ENCODE measurements at regions of chr7 and their contacts with region 1.

Region 1: DNA sequence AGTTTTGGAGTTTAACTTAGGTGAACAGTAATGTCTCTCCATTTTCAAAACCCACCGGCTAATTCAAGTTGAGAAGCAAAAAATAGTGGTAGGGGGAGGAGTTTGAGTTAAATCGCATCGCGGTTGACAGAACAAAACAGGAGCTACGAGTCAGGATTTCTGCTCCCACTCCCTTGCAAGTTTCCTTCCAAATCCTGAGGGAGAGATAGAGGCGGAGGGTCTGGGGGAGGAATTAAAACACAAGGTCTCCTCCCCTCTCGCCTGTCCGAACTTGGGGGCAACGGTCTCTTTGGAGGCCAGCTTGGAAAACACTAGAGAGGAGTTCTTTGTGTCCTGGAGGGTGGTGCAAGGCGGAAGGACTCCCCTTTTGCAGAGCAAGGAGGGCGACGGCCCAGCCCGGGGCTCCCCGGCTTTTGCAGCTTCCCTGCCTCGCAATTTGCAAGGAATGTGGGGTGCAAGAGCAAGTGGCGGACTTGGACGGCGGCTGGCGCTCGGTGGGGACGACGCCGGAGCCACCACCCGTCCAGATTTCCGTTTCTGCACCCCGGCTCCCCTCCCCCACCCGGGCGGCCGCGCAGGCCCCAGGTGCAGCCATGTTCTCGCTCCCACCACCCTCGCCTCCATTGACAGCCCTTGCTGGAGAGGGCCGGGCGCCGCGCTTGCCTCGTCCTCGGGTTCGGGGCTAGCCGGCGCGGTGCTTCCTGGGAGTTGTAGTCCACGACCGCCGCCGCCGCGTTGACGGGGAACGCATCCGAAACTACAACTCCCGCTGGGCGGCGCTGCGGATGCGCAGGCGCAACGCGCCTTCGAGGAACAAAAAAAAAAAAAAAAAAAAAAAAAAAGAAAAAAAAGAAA is 454 bp upstream of the GTF2I start:
- DNase-seq: peak; percentile 97
- H3K4me3 Mint-ChIP-seq: peak overlapping the region; percentile 85
- H3K27ac Mint-ChIP-seq: peak overlapping the region; percentile 93
- H3K4me1 Mint-ChIP-seq: peaks cover 48% of the 10 kb centered on the region
- H3K27me3 Mint-ChIP-seq: peaks cover 6% of the 10 kb centered on the region

Region 2: DNA sequence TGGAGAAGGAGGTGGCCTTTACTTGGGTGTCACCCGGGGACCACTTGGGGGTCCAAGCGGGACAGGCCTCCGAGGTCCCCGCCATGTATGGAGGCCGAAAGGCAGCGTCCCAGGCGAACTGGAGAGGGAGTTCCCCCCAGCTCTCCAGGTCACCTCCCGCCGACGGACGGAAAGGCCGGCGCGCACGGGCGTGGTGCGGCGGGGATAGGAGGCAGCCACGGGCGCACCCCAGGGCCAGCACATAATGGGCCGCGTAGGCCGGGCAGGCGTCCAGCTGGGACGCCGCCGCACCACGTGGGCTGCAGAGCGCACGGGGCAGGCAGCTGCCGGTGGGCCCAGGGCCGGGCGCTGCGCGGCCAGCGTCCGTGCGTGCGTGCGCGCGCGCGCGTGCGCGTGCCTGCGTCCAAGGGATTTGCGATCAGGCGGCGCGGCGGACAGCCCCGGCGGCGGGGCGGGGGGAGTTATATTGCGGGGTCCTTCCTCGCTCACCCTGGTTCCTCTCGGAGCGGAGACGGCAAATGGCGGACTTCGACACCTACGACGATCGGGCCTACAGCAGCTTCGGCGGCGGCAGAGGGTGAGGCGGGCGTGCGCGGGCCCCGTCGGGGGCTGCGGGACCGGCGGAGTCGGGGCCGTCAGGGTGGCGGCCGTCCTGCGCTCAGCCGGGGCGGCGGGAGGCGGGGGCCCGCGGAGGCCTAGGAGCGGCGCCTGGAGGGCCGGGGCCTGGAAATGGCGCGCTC is 483.0 kb before region 1 on chr7 and contains the start of gene EIF4H:
- intact Hi-C with region 1: loop called (anchors 2 kb)
- DNase-seq: peak; percentile 93
- H3K4me3 Mint-ChIP-seq: peak within 1 kb of the TSS; percentile 94
- H3K27ac Mint-ChIP-seq: peak within 1 kb of the TSS; percentile 90
- H3K4me1 Mint-ChIP-seq: peaks cover 45% of the 10 kb centered on the region
- H3K27me3 Mint-ChIP-seq: peaks cover 3% of the 10 kb centered on the region
- total RNA-seq, gene EIF4H: 343 and 355 TPM in 2 replicates

Region 3: GRCh38 chr7:74306730-74307469 is 350.2 kb before region 1 on chr7:
- intact Hi-C with region 1: no loop called
- DNase-seq: no peak
- H3K4me3 Mint-ChIP-seq: no peak overlapping the region
- H3K27ac Mint-ChIP-seq: no peak overlapping the region
- H3K4me1 Mint-ChIP-seq: peaks cover 17% of the 10 kb centered on the region
- H3K27me3 Mint-ChIP-seq: peaks cover 10% of the 10 kb centered on the region

Region 4: DNA sequence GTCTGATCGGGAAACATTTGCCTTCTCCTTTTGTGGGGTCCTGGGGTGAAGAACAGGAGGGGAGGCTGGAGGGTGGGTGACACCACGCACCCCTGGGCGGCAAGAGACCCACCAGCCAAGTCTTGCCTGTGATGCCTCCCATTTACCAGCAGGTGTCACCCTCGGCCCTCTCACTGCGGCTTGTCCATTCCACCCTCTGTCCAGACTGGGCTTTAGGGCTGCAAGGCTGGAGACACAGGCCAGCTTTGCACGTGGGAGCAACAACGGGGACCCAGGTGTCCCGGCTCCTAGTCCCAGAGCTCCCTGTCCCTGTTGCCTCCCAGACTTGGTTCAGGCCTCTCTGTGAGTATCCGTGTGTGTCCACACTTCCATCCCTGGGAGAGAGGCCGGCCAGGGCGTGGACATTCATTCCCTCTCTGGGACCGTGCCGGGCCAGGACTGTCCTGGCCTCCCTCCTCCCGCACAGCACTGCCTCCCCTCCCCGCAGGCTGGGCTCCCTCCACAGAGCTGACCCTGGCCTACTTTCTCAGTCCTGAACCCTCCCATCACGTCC is 239.6 kb before region 1 on chr7:
- intact Hi-C with region 1: loop called (anchors 10 kb)
- DNase-seq: peak; percentile 26
- H3K4me3 Mint-ChIP-seq: no peak overlapping the region
- H3K27ac Mint-ChIP-seq: no peak overlapping the region
- H3K4me1 Mint-ChIP-seq: no peaks in the 10 kb centered on the region
- H3K27me3 Mint-ChIP-seq: peaks cover 6% of the 10 kb centered on the region

Region 5: DNA sequence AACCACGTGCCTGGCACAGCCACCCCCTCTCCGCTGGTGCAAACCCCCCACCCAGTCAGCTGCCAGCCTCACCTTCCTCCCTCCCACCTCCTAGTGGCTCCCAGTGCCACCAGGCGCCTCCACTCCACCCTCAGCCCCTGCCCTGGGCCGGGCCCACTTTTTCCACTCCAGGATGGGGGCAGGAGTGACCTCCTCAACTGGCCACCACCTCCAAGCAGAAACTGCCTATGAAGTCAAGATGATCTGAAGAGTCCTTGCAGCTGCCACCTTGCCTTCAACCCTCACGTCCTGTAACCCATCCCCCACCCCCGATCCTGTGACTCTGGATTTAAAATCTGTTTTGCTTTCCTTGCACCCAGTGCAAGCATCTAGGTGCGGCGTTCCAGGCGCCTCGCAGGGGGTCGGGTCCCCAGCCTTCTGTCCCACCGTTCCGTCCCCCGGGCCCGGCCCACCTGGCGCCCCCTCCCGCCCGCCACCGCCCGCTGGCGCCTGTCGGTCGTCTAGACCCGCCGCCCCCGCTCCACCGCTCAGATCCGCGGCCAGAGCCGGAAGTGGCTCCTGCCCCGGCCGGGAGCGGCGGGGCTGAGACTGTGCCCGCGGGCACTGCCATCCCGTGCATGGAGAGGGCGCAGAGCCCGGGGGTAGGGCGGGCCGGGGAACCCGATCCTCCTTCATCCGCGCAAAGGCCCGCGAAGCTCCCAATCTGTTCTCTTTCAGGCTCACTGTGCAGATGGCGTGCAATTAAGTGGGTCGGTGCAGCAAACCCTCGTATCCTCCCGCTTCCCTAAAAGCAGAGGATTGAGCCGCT is 50.8 kb before region 1 on chr7:
- intact Hi-C with region 1: loop called (anchors 10 kb)
- DNase-seq: no peak
- H3K4me3 Mint-ChIP-seq: peak overlapping the region; percentile 51
- H3K27ac Mint-ChIP-seq: no peak overlapping the region
- H3K4me1 Mint-ChIP-seq: peaks cover 6% of the 10 kb centered on the region
- H3K27me3 Mint-ChIP-seq: peaks cover 3% of the 10 kb centered on the region